Activated CD4-positive, alpha-beta T cell treated with anti-CD3 and anti-CD28 coated beads, Interleukin-2, amount 10 ng/mL, durations not matched to agents 24 days and 14 days (primary cell): ENCODE measurements at regions of chr17 and their contacts with region 1.

Region 1: DNA sequence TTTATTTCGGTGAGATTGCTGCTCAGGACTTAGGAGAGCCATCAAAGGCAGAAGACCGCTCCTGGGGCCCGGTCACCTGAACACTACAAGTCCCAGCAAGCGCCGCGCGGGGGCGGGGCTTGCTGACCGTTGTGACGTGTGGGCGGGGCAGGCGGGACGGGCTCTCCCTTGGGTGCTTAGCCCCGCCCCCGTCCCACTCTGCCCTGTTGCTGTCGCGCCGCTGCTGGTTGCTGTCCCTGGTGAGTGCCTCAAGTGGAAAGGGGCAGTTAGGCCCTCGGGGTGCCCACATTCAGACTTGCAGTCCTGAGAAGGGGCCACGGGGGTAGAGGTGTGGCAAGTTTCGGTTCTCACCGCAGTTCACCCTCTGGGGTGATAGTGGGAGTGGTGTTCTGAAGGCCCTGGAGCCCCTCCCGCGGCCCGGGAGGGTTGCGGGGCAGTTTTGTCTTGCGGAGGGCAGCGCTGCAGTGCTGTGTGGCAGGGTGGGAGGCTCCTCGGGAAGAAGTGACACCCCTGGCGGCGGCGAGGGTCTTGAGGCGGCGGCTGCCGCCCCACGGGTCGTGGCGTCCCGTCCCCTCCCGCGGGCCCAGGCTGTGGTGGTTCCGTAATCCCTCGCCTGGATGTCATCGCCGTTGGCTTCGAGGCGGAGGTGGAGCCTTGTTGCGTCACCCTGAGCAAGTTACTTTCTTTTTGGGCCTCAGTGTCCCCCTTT is at the start of gene CALCOCO2:
- DNase-seq: peak; percentile 96
- H3K4me3 Mint-ChIP-seq: peak within 1 kb of the TSS; percentile 99
- H3K27ac Mint-ChIP-seq: peak within 1 kb of the TSS; percentile 98
- H3K4me1 Mint-ChIP-seq: peaks cover 47% of the 10 kb centered on the region
- H3K27me3 Mint-ChIP-seq: peaks cover 6% of the 10 kb centered on the region
- total RNA-seq, gene CALCOCO2: 48.1 and 52.8 TPM in 2 replicates

Region 2: DNA sequence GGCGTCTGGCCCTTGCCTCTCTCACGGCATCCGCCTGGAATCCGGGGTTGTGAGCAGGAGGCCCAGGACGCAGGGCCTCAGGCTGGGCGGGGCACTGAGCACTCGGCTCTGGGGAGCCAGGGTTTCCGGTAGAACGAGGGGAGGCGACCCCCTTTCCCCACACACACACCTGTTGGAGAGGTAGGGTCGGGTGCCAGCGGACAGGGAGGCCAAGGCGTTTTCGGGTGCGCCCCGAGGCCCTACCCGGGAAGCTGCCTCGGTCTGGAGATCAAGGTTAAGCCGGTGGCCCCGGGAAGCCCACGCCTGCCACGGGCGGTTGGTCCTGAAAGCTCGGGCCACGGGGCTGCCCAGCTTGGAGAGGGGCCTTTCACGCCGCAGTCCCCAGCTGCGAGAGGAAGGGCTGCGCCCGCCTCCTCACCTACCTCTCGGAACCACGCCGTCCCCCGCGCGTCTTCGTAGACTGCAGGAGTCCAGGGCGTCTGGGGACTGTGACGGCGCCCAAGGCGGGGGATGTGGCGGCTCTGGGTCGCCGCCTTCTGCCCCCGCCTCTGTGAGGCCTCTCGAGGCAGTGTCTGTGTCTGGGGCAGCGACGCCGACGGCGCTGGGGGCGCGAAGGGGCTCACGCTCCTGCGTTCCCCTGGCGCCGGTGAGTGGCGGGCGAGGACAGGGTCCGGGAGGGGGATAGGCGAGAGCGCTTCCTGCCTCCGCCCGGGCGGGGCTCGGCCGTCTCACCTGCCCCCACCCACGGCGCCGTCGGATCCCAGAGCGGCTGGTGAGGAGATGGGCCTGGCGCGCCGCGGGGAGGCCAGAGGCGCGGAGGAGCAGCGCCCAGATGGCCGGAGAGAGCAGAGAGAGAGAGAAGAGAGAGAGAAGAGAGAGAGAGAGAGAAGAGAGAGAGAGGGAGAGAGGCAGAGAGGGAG is 184.6 kb before region 1 on chr17:
- intact Hi-C with region 1: no loop called
- DNase-seq: peak; percentile 69
- H3K4me3 Mint-ChIP-seq: peak overlapping the region; percentile 56
- H3K27ac Mint-ChIP-seq: no peak overlapping the region
- H3K4me1 Mint-ChIP-seq: peaks cover 19% of the 10 kb centered on the region
- H3K27me3 Mint-ChIP-seq: peaks cover 80% of the 10 kb centered on the region

Region 3: GRCh38 chr17:48816774-48817590 is 14.0 kb before region 1 on chr17 and contains the start of gene TTLL6:
- intact Hi-C with region 1: loop called (anchors 2 kb)
- DNase-seq: peak; percentile 95
- H3K4me3 Mint-ChIP-seq: peak within 1 kb of the TSS; percentile 86
- H3K27ac Mint-ChIP-seq: no peak within 1 kb of the TSS
- H3K4me1 Mint-ChIP-seq: peaks cover 20% of the 10 kb centered on the region
- H3K27me3 Mint-ChIP-seq: peaks cover 65% of the 10 kb centered on the region
- total RNA-seq, gene TTLL6: not detected in 2 replicates

Region 4: GRCh38 chr17:48841395-48841831 is 10.4 kb after region 1 on chr17:
- intact Hi-C with region 1: loop called (anchors 1 kb)
- DNase-seq: peak; percentile 87
- H3K4me3 Mint-ChIP-seq: peak overlapping the region; percentile 69
- H3K27ac Mint-ChIP-seq: peak overlapping the region; percentile 63
- H3K4me1 Mint-ChIP-seq: peaks cover 38% of the 10 kb centered on the region
- H3K27me3 Mint-ChIP-seq: no peaks in the 10 kb centered on the region

Region 5: GRCh38 chr17:48892940-48893645 is 62.1 kb after region 1 on chr17:
- intact Hi-C with region 1: loop called (anchors 1 kb)
- DNase-seq: no peak
- H3K4me3 Mint-ChIP-seq: peak overlapping the region; percentile 90
- H3K27ac Mint-ChIP-seq: peak overlapping the region; percentile 97
- H3K4me1 Mint-ChIP-seq: peaks cover 18% of the 10 kb centered on the region
- H3K27me3 Mint-ChIP-seq: peaks cover 3% of the 10 kb centered on the region